ENCODE measurements at regions of chr10 and their contacts with region 1.

Region 1: GRCh38 chr10:103859161-103860086 is 4.0 kb upstream of the SH3PXD2A start:
- DNase-seq: peak; percentile 40
- H3K4me3 Mint-ChIP-seq: peak overlapping the region; percentile 2
- H3K27ac Mint-ChIP-seq: no peak overlapping the region
- H3K4me1 Mint-ChIP-seq: peaks cover 19% of the 10 kb centered on the region
- H3K27me3 Mint-ChIP-seq: peaks cover 39% of the 10 kb centered on the region

Region 2: GRCh38 chr10:103772096-103772845 is 87.2 kb before region 1 on chr10:
- intact Hi-C with region 1: loop called (anchors 5 kb)
- DNase-seq: peak; percentile 60
- H3K4me3 Mint-ChIP-seq: peak overlapping the region; percentile 87
- H3K27ac Mint-ChIP-seq: peak overlapping the region; percentile 83
- H3K4me1 Mint-ChIP-seq: peaks cover 34% of the 10 kb centered on the region
- H3K27me3 Mint-ChIP-seq: peaks cover 6% of the 10 kb centered on the region

Measured in activated T-helper 1 cell treated with anti-CD3 and anti-CD28 coated beads, Interleukin-12 subunit alpha, Interleukin-12 subunit beta, Interleukin-2, Interleukin-4 antibody, amounts not matched to agents 30 ng/mL and 10 ng/mL and 1 ng/mL, durations not matched to agents 14 hours and 24 hours and 36 hours (primary cell).